Endothelial cell of umbilical vein (primary cell): ENCODE measurements at regions of chr4 and their contacts with region 1.

Region 1: DNA sequence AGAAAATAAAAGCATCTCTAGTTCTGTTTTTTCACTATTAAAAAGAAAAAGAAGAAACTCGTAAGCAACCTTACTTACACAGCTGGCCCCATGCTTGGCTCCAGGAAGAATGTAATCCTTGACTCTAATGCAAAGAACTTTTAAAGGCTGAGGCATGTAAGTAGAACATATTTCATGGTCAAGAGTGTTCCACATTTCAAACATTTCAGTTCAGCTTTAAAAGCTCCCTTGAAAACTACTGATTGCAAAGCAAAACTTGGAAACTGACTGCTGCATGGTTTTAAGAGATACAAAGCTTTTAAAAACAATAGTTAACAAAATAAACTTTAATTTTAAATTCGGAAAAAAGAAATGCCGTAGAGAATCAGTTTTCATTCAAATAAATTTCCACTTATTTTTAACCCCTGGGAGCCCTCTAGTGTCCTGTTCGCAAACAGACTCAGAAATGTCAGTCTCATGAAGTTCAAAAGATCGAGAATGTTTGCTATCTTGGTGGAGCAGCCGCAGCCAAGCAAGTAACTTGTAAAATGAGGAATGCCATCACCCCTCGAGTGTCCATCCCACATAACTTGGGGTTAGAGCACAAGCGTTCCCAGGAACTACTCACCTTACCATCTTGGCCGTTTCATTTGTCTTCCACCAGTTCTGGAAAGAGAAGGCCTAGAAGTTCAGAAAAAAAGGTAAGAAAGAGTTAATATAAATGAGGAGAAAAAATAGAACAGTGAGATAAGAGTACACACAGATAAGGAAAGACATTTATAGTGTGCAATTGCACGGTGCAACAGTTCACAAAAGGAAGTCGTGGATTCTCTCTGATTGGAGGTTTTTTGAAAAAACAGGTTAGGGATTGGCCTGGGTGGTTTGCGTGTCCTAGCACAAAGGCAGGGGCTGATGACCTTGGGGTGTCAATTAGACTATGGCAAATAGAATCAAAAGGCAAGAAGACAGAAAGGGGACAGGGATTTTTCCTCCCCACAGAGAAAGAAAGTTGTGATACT is at the start of gene GASK1B:
- DNase-seq: peak; percentile 91
- H3K4me3 ChIP-seq: peak within 1 kb of the TSS; percentile 24 to 94 (median 53)
- H3K27ac ChIP-seq: peak within 1 kb of the TSS; percentile 59
- H3K4me1 ChIP-seq: peaks cover 28% of the 10 kb centered on the region
- H3K27me3 ChIP-seq: no peaks in the 10 kb centered on the region
- CTCF ChIP-seq: peak; percentile 50 to 57
- POLR2A ChIP-seq: no peak
- total RNA-seq, gene GASK1B: 235 and 238 TPM in 2 replicates

Region 2: GRCh38 chr4:156946516-156947424 is 1225.8 kb before region 1 on chr4:
- CTCF ChIA-PET with region 1: no interaction called
- POLR2A ChIA-PET with region 1: no interaction called
- dilution Hi-C with region 1: no loop called
- intact Hi-C with region 1: loop called (anchors 5 kb)
- DNase-seq: peak; percentile 89
- H3K4me3 ChIP-seq: no peak overlapping the region
- H3K27ac ChIP-seq: peak overlapping the region; percentile 84
- H3K4me1 ChIP-seq: peaks cover 60% of the 10 kb centered on the region
- H3K27me3 ChIP-seq: no peaks in the 10 kb centered on the region
- CTCF ChIP-seq: no peak
- POLR2A ChIP-seq: no peak

Region 3: GRCh38 chr4:157700898-157701694 is 471.5 kb before region 1 on chr4:
- CTCF ChIA-PET with region 1: no interaction called
- POLR2A ChIA-PET with region 1: no interaction called
- dilution Hi-C with region 1: no loop called
- intact Hi-C with region 1: loop called (anchors 2 kb)
- DNase-seq: peak; percentile 98
- H3K4me3 ChIP-seq: peak overlapping the region in 1 of 3 experiments; percentile 10
- H3K27ac ChIP-seq: peak overlapping the region; percentile 79
- H3K4me1 ChIP-seq: peaks cover 25% of the 10 kb centered on the region
- H3K27me3 ChIP-seq: no peaks in the 10 kb centered on the region
- CTCF ChIP-seq: no peak
- POLR2A ChIP-seq: no peak

Region 4: DNA sequence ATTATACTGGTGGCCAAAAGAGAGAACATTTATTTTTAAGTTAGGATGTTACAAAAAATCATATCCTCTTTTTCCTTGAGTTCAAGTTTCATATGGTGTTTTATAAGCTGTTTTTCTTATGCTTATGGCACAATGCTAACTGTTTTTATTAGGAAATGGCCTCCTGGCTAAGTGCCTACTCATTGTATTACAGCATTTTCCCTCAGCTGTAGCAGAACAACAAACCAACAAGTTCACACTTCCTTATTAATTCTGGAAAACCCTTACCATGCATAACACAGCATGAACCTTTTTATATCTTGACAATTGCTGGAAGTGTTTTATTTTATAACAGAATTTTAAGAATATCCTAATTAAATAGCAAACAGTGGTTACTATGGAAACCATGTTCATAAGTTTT is 165.6 kb before region 1 on chr4:
- CTCF ChIA-PET with region 1: interaction called, 15 read pairs
- POLR2A ChIA-PET with region 1: no interaction called
- dilution Hi-C with region 1: loop called (anchors 25 kb)
- intact Hi-C with region 1: loop called (anchors 1 kb)
- DNase-seq: peak; percentile 100
- H3K4me3 ChIP-seq: no peak overlapping the region
- H3K27ac ChIP-seq: peak overlapping the region; percentile 75
- H3K4me1 ChIP-seq: peaks cover 36% of the 10 kb centered on the region
- H3K27me3 ChIP-seq: no peaks in the 10 kb centered on the region
- CTCF ChIP-seq: no peak
- POLR2A ChIP-seq: no peak

Region 5: GRCh38 chr4:158121187-158121586 is 51.4 kb before region 1 on chr4:
- CTCF ChIA-PET with region 1: interaction called, 4 read pairs
- POLR2A ChIA-PET with region 1: no interaction called
- dilution Hi-C with region 1: no loop called
- intact Hi-C with region 1: loop called (anchors 2 kb)
- DNase-seq: no peak
- H3K4me3 ChIP-seq: no peak overlapping the region
- H3K27ac ChIP-seq: no peak overlapping the region
- H3K4me1 ChIP-seq: no peaks in the 10 kb centered on the region
- H3K27me3 ChIP-seq: no peaks in the 10 kb centered on the region
- CTCF ChIP-seq: no peak
- POLR2A ChIP-seq: no peak

Region 6: DNA sequence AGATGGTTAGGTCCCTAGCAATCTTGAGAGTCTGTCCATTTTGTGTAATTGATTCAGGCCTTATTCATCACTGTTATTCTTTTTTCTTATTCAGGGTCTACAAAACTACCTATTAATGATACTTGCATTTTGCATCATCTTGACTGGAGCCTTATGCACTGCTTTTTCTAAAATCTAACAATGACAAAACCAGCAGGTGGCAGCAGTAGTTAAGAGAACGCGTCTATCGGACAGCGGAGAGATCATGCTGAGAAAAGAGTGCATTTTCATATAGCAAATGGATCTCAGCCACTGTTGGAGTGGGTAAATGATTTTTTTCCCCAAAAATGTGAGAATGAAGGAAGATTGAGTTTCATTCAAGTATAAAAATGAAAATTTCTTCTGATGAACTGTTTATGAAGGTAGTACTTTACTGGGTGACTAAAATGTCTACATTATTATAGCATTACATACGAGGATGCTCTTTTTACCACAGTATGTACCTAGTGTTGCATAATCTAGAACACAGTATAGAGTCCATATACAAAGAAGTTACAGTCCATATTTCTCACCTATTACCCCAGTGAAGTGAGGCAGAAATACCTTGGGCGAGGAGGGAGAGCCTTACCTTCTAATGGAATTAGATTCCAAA is 80.9 kb after region 1 on chr4:
- CTCF ChIA-PET with region 1: interaction called, 13 read pairs
- POLR2A ChIA-PET with region 1: no interaction called
- dilution Hi-C with region 1: no loop called
- intact Hi-C with region 1: loop called (anchors 5 kb)
- DNase-seq: peak; percentile 71
- H3K4me3 ChIP-seq: no peak overlapping the region
- H3K27ac ChIP-seq: no peak overlapping the region
- H3K4me1 ChIP-seq: no peaks in the 10 kb centered on the region
- H3K27me3 ChIP-seq: no peaks in the 10 kb centered on the region
- CTCF ChIP-seq: peak; percentile 60
- POLR2A ChIP-seq: no peak